ENCODE measurements at regions of chr1 and their contacts with region 1.

Region 1: DNA sequence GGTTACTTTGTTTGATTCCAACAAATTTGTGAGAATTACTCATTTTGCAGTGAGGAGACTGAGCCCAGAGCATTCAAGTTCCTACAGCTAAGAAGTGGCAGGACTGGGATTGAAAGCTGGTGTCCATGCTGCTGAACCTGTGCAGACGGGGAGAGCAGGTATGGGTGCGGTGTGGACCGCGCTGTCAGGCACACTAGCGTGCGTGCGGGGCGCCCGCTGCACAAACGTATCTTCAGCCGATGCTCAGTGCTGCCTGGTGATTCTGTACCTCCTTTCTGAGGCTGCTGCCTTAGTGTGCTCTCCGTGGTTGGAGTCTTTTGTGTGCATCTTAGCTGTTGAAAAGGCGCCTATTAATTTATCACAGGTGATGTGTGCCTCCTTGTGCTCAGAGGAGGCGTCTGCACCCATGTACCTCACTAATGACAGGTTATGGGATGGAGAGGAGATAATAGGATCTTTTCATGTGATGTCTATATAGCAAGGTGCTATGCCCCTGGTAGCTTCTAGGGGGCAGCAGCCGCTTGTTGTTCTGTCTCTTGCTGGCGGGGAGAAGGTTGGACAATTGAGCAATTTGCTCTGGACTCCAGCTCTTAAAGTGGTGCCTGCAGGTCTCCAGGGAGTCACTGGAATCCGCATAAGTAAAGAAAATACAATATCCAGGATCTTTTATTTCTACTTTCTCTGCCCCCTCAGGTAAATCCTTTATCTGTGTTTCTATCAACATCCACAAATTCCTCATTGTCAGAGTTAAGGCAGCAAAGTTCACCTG is 32.5 kb downstream of the PEX14 start:
- DNase-seq: peak; percentile 77
- ATAC-seq: peak; percentile 44
- H3K4me3 Mint-ChIP-seq: no peak overlapping the region
- H3K27ac Mint-ChIP-seq: peak overlapping the region; percentile 63
- H3K4me1 Mint-ChIP-seq: peaks cover 61% of the 10 kb centered on the region
- H3K27me3 Mint-ChIP-seq: no peaks in the 10 kb centered on the region

Region 2: DNA sequence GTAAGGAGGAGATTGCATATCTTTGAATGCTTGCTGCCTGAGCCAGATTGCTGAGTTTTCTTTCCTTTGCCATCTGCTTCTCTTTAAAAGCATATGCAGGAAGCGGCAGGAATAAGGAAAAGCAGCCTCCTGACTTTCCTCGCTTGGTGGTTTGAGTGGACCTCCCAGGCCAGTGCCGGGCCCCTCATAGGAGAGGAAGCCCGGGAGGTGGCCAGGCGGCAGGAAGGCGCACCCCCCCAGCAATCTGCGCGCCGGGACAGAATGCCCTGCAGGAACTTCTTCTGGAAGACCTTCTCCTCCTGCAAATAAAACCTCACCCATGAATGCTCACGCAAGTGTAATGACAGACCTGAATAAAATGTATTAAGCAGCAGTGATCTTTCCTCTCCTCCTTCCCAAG is 56.0 kb before region 1 on chr1:
- CTCF ChIA-PET with region 1: no interaction called
- DNase-seq: no peak
- ATAC-seq: no peak
- H3K4me3 Mint-ChIP-seq: no peak overlapping the region
- H3K27ac Mint-ChIP-seq: no peak overlapping the region
- H3K4me1 Mint-ChIP-seq: peaks cover 2% of the 10 kb centered on the region
- H3K27me3 Mint-ChIP-seq: no peaks in the 10 kb centered on the region

Region 3: DNA sequence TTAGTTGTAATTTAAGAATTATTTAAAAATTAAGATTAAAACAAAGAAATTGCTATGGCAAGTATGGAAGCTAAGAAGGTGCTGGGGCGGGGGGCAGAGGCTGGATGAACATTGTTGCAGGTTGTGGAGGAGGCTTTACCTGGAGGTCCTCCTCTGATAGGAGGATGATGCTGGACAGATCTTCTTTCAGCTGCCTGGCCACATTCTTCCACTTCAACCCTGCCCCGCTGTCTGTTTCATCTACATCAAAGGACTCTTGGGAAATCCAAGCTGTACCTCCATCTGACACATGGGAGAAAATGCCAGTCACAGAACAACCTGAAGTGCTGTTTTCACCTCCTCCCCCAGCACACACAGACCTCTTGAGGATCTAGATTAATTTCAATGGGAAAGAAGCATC is 40.2 kb before region 1 on chr1:
- CTCF ChIA-PET with region 1: no interaction called
- DNase-seq: no peak
- ATAC-seq: no peak
- H3K4me3 Mint-ChIP-seq: no peak overlapping the region
- H3K27ac Mint-ChIP-seq: no peak overlapping the region
- H3K4me1 Mint-ChIP-seq: peaks cover 10% of the 10 kb centered on the region
- H3K27me3 Mint-ChIP-seq: no peaks in the 10 kb centered on the region

Region 4: GRCh38 chr1:10522322-10522860 is 15.1 kb after region 1 on chr1:
- CTCF ChIA-PET with region 1: interaction called, 24 read pairs
- DNase-seq: no peak
- ATAC-seq: no peak
- H3K4me3 Mint-ChIP-seq: no peak overlapping the region
- H3K27ac Mint-ChIP-seq: no peak overlapping the region
- H3K4me1 Mint-ChIP-seq: peaks cover 32% of the 10 kb centered on the region
- H3K27me3 Mint-ChIP-seq: no peaks in the 10 kb centered on the region

Region 5: GRCh38 chr1:10909697-10910671 is 402.7 kb after region 1 on chr1:
- CTCF ChIA-PET with region 1: interaction called, 10 read pairs
- DNase-seq: peak; percentile 83
- ATAC-seq: peak; percentile 91
- H3K4me3 Mint-ChIP-seq: no peak overlapping the region
- H3K27ac Mint-ChIP-seq: no peak overlapping the region
- H3K4me1 Mint-ChIP-seq: peaks cover 1% of the 10 kb centered on the region
- H3K27me3 Mint-ChIP-seq: peaks cover 11% of the 10 kb centered on the region

Measured in activated CD8-positive, alpha-beta memory T cell treated with anti-CD3 and anti-CD28 coated beads, Interleukin-2, amount 10 ng/mL, durations not matched to agents 7 days and 5 days (primary cell).